GM12878 (cell line): ENCODE measurements at regions of chr2 and their contacts with region 1.

Region 1: GRCh38 chr2:57906152-57906732 is 140.4 kb upstream of the VRK2 start:
- DNase-seq: no peak
- ATAC-seq: peak; percentile 78
- H3K4me3 ChIP-seq: no peak overlapping the region
- H3K27ac ChIP-seq: no peak overlapping the region
- H3K4me1 ChIP-seq: peaks cover 11% of the 10 kb centered on the region; the same call in 1 of the 2 replicates
- H3K27me3 ChIP-seq: no peaks in the 10 kb centered on the region
- CTCF ChIP-seq: peak; percentile 86 to 90 (median 89); a peak in 5 of 6 replicates
- EP300 ChIP-seq: no peak
- POLR2A ChIP-seq: no peak
- RAD21 ChIP-seq: peak; percentile 100

Region 2: DNA sequence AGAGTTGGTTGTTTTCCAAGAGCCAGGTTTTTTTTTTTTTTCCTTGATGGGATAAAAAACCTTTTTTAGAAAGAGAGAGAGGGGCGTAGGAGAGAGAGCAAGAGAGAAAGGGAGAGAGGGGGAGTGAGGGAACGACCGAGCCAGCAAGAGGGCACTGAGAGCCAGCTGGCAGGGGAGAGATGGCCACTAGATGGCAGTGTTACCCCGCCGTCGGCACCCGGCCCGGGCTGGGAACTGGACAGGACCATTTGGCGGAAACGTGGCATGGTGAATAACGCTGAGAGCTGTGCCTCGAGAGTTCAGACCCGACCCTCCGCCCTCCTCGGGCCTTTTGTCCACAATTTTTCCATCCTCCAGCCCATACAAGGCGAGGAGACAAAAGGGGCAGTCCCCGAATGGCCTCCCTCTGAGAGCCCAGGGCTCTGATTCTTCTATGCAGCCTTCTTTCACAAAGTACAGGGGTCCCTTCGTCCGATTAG is 146.4 kb before region 1 on chr2:
- CTCF ChIA-PET with region 1: interaction called, 46 read pairs
- POLR2A ChIA-PET with region 1: no interaction called
- RAD21 ChIA-PET with region 1: interaction called, 16 read pairs
- SMC1A ChIA-PET with region 1: interaction called, 17 read pairs
- in situ Hi-C with region 1: no loop called
- intact Hi-C with region 1: loop called (anchors 1 kb)
- DNase-seq: peak; percentile 48
- ATAC-seq: peak; percentile 97
- H3K4me3 ChIP-seq: peak overlapping the region; percentile 58; the same call in 1 of the 2 replicates
- H3K27ac ChIP-seq: peak overlapping the region; percentile 73
- H3K4me1 ChIP-seq: peaks cover 24% of the 10 kb centered on the region; the same call in 1 of the 2 replicates
- H3K27me3 ChIP-seq: no peaks in the 10 kb centered on the region
- CTCF ChIP-seq: peak; percentile 90 to 93 (median 91)
- EP300 ChIP-seq: no peak
- POLR2A ChIP-seq: no peak
- RAD21 ChIP-seq: peak; percentile 93

Region 3: GRCh38 chr2:57920342-57920939 is 14.2 kb after region 1 on chr2:
- CTCF ChIA-PET with region 1: interaction called, 10 read pairs
- POLR2A ChIA-PET with region 1: interaction called, 4 read pairs
- RAD21 ChIA-PET with region 1: interaction called, 34 read pairs
- SMC1A ChIA-PET with region 1: interaction called, 15 read pairs
- in situ Hi-C with region 1: no loop called
- intact Hi-C with region 1: no loop called
- DNase-seq: no peak
- ATAC-seq: peak; percentile 70
- H3K4me3 ChIP-seq: no peak overlapping the region
- H3K27ac ChIP-seq: no peak overlapping the region
- H3K4me1 ChIP-seq: no peaks in the 10 kb centered on the region; the same call in 1 of the 2 replicates
- H3K27me3 ChIP-seq: no peaks in the 10 kb centered on the region
- CTCF ChIP-seq: no peak
- EP300 ChIP-seq: no peak
- POLR2A ChIP-seq: no peak
- RAD21 ChIP-seq: no peak

Region 4: GRCh38 chr2:58025150-58025933 is 119.1 kb after region 1 on chr2:
- CTCF ChIA-PET with region 1: interaction called, 4 read pairs
- POLR2A ChIA-PET with region 1: interaction called, 5 read pairs
- RAD21 ChIA-PET with region 1: interaction called, 17 read pairs
- SMC1A ChIA-PET with region 1: interaction called, 19 read pairs
- in situ Hi-C with region 1: no loop called
- intact Hi-C with region 1: no loop called
- DNase-seq: no peak
- ATAC-seq: peak; percentile 54
- H3K4me3 ChIP-seq: no peak overlapping the region
- H3K27ac ChIP-seq: no peak overlapping the region
- H3K4me1 ChIP-seq: peaks cover 14% of the 10 kb centered on the region
- H3K27me3 ChIP-seq: no peaks in the 10 kb centered on the region
- CTCF ChIP-seq: no peak
- EP300 ChIP-seq: no peak
- POLR2A ChIP-seq: no peak
- RAD21 ChIP-seq: no peak

Region 5: GRCh38 chr2:58063641-58064040 is 157.4 kb after region 1 on chr2:
- CTCF ChIA-PET with region 1: no interaction called
- POLR2A ChIA-PET with region 1: no interaction called
- RAD21 ChIA-PET with region 1: interaction called, 3 read pairs
- SMC1A ChIA-PET with region 1: interaction called, 7 read pairs
- in situ Hi-C with region 1: no loop called
- intact Hi-C with region 1: loop called (anchors 5 kb)
- DNase-seq: no peak
- ATAC-seq: peak; percentile 9
- H3K4me3 ChIP-seq: no peak overlapping the region
- H3K27ac ChIP-seq: peak overlapping the region; percentile 59
- H3K4me1 ChIP-seq: peaks cover 14% of the 10 kb centered on the region
- H3K27me3 ChIP-seq: no peaks in the 10 kb centered on the region
- CTCF ChIP-seq: no peak
- EP300 ChIP-seq: no peak
- POLR2A ChIP-seq: no peak
- RAD21 ChIP-seq: no peak

Region 6: GRCh38 chr2:58357521-58357920 is 451.3 kb after region 1 on chr2:
- CTCF ChIA-PET with region 1: interaction called, 5 read pairs
- POLR2A ChIA-PET with region 1: no interaction called
- RAD21 ChIA-PET with region 1: no interaction called
- SMC1A ChIA-PET with region 1: interaction called, 9 read pairs
- in situ Hi-C with region 1: loop called (anchors 5 kb)
- intact Hi-C with region 1: loop called (anchors 5 kb)
- DNase-seq: no peak
- ATAC-seq: no peak
- H3K4me3 ChIP-seq: no peak overlapping the region
- H3K27ac ChIP-seq: no peak overlapping the region
- H3K4me1 ChIP-seq: no peaks in the 10 kb centered on the region
- H3K27me3 ChIP-seq: no peaks in the 10 kb centered on the region
- CTCF ChIP-seq: no peak
- EP300 ChIP-seq: no peak
- POLR2A ChIP-seq: no peak
- RAD21 ChIP-seq: no peak

Region 7: DNA sequence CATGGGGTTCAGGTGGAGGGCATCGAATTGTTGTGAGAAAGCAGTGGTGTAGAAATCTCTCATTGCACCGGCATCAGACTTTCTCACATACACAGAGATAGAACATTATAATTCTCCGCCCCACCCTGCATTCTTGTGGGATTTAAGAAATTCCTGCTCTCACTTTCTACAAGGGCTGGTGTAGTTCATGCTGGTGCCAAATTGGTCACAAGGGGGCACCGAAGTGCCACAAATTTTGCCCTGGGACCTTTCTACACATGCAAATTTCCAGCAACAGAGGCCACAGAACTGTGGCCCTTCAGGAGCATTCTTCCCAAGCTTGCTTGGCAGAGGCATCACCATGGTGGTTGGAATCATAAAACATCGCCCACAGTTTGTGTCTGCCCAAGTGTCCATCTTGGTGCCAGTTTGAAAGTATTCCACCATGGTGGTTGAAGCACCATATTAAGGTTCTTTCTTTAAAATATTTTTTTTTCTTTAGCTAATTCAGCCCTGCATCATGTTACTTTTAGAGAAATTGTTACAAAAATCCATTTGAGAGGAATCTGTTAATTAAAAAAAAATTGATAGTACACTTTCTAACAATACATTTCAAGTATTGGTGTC is 856.0 kb after region 1 on chr2:
- CTCF ChIA-PET with region 1: interaction called, 4 read pairs
- POLR2A ChIA-PET with region 1: no interaction called
- RAD21 ChIA-PET with region 1: no interaction called
- SMC1A ChIA-PET with region 1: no interaction called
- in situ Hi-C with region 1: no loop called
- intact Hi-C with region 1: loop called (anchors 10 kb)
- DNase-seq: no peak
- ATAC-seq: peak; percentile 87
- H3K4me3 ChIP-seq: no peak overlapping the region
- H3K27ac ChIP-seq: no peak overlapping the region
- H3K4me1 ChIP-seq: no peaks in the 10 kb centered on the region
- H3K27me3 ChIP-seq: no peaks in the 10 kb centered on the region; a peak in 1 of 4 replicates
- CTCF ChIP-seq: peak; percentile 58 to 68 (median 62); a peak in 5 of 6 replicates
- EP300 ChIP-seq: no peak
- POLR2A ChIP-seq: no peak
- RAD21 ChIP-seq: peak; percentile 80